Activated T-helper 1 cell treated with anti-CD3 and anti-CD28 coated beads, Interleukin-12 subunit alpha, Interleukin-12 subunit beta, Interleukin-2, Interleukin-4 antibody, amounts not matched to agents 30 ng/mL and 10 ng/mL and 1 ng/mL, durations not matched to agents 14 hours and 24 hours and 36 hours (primary cell): ENCODE measurements at regions of chr19 and their contacts with region 1.

Region 1: DNA sequence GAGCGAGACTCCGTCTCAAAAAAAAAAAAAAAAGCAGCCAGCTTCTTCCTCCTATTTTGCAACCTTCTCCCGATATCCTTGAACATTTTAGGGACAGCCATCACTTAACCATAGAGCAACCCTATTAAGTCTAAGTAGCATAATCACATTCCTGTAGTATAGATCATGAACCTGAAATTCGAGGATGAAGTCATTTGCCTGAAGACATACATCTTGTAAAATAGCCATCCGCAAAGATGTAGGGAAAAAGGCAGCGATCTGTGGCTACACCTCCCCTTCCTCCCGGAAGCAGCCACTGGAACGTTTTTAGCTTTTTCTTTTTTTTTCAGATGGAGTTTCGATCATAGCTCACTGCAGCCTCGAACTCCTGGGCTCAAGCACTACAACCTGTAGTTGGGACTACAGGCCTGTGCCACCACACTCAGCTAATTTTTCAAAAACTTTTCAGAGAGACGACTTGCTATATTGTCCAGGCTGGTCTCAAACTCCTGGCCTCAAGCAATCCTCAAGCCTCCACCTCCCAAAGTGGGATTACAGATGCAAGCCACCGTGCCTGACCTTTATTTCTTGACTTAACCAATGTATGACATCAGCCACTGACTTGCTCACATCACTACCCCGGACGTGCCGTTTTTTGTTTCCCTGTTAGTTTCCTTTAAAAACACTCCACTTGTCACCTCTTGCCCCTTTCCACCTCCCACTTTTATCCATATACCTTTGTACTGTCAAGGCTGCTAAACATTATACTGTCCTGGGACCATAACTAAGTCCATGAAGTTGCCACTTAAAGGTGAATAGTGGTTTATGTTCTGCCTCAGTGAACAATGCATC is 2.0 kb upstream of the EPHX3 start:
- DNase-seq: no peak
- H3K4me3 Mint-ChIP-seq: no peak overlapping the region
- H3K27ac Mint-ChIP-seq: no peak overlapping the region
- H3K4me1 Mint-ChIP-seq: no peaks in the 10 kb centered on the region
- H3K27me3 Mint-ChIP-seq: peaks cover 30% of the 10 kb centered on the region

Region 2: DNA sequence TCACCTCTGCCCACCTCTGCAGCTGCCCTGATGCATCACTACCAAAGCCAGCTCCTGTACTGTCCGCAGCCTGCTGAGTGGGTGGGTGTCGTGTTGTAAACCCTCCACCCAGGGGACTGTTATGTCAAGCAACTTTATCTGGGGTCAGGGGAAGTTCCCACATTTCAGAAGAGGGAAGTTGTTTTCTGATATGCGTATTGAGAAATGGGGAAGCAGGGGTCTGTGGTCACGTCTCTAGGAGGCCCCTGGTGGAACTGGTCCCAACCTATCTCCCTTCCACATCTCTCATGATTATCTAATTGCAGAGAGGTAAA is 620.2 kb before region 1 on chr19:
- intact Hi-C with region 1: no loop called
- DNase-seq: no peak
- H3K4me3 Mint-ChIP-seq: no peak overlapping the region
- H3K27ac Mint-ChIP-seq: no peak overlapping the region
- H3K4me1 Mint-ChIP-seq: no peaks in the 10 kb centered on the region
- H3K27me3 Mint-ChIP-seq: no peaks in the 10 kb centered on the region

Region 3: DNA sequence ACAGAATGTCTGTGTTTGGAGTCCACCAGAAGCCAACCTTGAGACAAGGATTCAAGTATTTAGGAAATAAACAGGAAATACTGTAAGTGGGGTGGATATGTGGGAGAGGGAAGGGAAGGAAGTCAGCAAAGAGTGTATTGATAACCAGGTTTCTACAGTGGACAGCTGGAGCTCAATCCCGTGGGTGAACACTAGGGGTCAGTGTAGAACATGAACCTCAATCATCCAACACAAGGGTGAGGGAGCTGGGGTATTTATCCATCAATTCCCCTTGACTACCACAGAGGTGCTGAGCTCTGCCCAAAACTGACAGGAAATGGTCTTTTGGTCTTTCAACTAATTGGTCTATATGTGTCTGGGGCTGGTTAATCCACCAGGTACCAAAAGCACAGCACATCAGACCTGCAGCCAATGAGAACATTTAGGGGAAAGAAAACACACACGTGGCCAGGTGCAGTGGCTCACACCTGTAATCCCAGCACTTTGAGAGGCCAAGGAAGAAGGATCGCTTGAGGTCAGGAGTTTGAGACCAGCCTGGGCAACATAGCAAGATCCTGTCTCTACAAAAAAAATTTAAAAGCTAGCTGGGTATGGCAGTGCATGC is 132.7 kb before region 1 on chr19:
- intact Hi-C with region 1: loop called (anchors 10 kb)
- DNase-seq: peak; percentile 29
- H3K4me3 Mint-ChIP-seq: no peak overlapping the region
- H3K27ac Mint-ChIP-seq: no peak overlapping the region
- H3K4me1 Mint-ChIP-seq: no peaks in the 10 kb centered on the region
- H3K27me3 Mint-ChIP-seq: peaks cover 14% of the 10 kb centered on the region

Region 4: DNA sequence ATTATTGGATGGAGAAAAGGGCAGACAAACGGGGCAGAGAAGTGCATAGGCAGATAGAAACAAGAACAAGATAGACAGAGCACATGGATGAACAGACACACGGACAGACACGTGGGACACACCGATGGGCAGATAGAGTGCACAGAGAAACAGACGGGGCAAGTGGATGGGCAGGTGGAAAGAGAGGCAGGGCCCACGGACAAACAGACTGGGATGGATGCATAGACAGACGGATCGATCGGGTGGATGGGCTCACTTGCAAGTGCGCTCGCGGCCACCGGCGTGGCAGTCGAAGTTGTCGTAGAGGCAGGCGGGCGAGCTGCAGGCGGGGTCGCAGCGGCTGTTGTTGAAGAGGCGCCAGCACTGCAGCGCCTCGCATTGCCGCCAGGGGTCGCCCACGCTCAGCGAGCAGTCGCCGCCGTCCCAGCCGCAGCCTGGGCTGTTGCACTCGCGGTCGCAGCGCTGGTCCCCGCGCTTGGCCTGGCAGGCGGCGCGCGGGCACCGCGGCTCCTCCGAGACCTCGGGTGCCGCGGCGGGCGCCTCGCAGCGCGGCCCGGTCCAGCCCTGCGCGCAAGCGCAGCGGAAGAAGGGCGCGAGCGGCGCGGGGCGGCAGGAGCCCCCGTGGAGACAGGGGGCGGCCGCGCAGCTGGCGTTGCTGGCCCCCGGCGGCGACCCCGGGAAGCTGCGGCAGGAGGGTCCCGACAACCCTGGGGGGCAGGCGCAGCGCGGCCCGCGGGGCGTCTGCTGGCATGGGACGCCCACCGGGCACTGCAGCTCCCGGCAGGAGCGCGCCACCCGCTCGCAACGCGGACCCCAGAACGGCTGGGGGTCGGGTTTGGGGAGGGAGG is 56.8 kb before region 1 on chr19:
- intact Hi-C with region 1: loop called (anchors 5 kb)
- DNase-seq: peak; percentile 74
- H3K4me3 Mint-ChIP-seq: peak overlapping the region; percentile 13
- H3K27ac Mint-ChIP-seq: no peak overlapping the region
- H3K4me1 Mint-ChIP-seq: peaks cover 6% of the 10 kb centered on the region
- H3K27me3 Mint-ChIP-seq: peaks cover 6% of the 10 kb centered on the region

Region 5: DNA sequence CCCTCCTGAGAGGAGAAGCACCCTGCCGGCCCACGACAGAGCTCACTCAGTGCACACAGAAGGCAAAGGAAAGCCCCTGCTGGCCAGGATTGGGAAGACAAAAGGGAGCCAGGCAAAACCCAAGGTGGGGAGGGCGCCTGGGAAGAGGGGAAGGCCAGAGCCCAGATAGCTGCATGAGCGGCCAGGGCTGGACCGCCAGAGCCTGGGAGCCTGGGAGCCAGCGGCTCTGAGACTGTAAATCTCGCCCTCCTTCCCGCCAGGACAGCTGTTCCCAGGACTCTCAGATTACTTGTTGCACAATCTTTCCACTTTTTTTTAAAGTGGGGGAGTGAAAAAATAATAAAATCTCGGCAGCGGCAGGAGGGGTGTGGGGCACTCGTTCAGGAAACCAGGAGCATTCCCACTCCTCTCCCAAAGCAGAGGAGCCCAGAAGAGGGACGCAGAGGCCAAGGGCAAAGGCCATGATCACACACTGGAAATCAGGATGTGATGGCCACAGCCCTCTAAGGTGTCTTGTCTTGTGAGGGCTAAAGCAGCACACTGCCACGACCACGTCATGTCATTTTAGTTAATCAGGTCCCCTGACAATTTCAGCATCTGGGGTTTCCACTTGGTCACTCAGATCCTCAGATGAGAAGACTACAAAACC is 17.6 kb after region 1 on chr19:
- intact Hi-C with region 1: no loop called
- DNase-seq: no peak
- H3K4me3 Mint-ChIP-seq: no peak overlapping the region
- H3K27ac Mint-ChIP-seq: no peak overlapping the region
- H3K4me1 Mint-ChIP-seq: no peaks in the 10 kb centered on the region
- H3K27me3 Mint-ChIP-seq: no peaks in the 10 kb centered on the region